ENCODE measurements at regions of chr2 and their contacts with region 1.

Region 1: GRCh38 chr2:196798980-196799379 is 503 bp downstream of the GTF3C3 start:
- DNase-seq: no peak
- H3K4me3 ChIP-seq: peak overlapping the region; percentile 90
- H3K27ac ChIP-seq: peak overlapping the region; percentile 37
- H3K4me1 ChIP-seq: peaks cover 13% of the 10 kb centered on the region
- CTCF ChIP-seq: no peak

Region 2: DNA sequence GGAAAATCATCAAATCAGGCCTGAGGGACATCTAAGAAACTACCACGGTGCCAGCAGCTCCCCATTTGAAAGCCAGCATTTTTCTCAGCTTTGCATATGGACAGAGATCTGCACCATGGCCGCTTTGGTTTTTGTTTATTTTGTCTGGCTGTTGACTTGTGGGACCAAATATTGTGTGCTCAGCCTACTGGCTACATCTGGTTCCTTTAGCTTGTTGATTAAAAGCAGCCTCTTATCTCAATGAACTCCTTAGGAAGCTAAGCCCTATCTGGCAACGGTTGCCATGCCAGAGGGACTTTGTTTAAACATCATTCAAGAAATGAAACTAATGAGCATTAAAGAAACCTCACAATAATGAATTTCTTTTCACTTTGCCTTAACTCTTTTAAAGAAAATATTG is 191.9 kb before region 1 on chr2:
- CTCF ChIA-PET with region 1: no interaction called
- POLR2A ChIA-PET with region 1: interaction called, 11 read pairs
- intact Hi-C with region 1: no loop called
- DNase-seq: no peak
- H3K4me3 ChIP-seq: no peak overlapping the region
- H3K27ac ChIP-seq: no peak overlapping the region
- H3K4me1 ChIP-seq: no peaks in the 10 kb centered on the region
- CTCF ChIP-seq: no peak

Region 3: DNA sequence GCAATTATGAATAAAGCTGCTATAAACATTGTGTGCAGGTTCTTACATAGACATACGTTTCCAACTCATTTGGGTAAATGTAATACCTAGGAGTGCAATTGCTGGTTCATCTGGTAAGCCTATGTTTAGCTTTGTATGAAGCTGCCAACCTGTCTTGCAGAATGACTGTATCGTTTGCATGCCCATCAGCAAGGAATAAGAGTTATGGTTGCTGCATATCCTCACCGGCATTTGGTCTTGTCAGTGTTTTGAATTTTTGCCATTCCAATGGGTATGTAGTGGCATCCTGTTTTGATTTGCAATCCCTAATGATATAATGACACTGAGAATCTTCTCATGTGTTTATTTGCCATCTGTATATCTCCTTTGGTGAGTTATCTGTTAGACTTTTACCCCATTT is 138.7 kb before region 1 on chr2:
- CTCF ChIA-PET with region 1: no interaction called
- POLR2A ChIA-PET with region 1: no interaction called
- intact Hi-C with region 1: no loop called
- DNase-seq: no peak
- H3K4me3 ChIP-seq: no peak overlapping the region
- H3K27ac ChIP-seq: no peak overlapping the region
- H3K4me1 ChIP-seq: no peaks in the 10 kb centered on the region
- CTCF ChIP-seq: no peak

Region 4: DNA sequence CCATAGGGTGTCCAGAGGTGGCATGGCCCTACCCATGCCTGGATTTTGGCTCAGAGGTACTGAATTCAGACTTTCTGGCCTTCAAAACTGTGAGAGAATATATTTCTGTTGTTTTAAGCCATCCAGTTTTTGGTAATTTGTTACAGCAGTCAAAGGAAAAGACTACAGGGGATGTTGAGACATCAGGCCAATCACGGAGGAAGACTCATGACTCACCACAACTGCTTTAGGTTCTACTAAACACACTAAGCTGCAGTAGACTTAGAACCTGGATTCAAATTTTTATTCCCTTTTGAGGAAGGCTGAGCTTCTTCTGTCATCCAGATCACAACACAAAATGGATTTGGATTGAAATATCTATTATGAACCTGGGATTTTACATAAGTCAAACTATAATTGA is 22.2 kb after region 1 on chr2:
- CTCF ChIA-PET with region 1: no interaction called
- POLR2A ChIA-PET with region 1: no interaction called
- intact Hi-C with region 1: no loop called
- DNase-seq: no peak
- H3K4me3 ChIP-seq: no peak overlapping the region
- H3K27ac ChIP-seq: no peak overlapping the region
- H3K4me1 ChIP-seq: no peaks in the 10 kb centered on the region
- CTCF ChIP-seq: no peak

Region 5: DNA sequence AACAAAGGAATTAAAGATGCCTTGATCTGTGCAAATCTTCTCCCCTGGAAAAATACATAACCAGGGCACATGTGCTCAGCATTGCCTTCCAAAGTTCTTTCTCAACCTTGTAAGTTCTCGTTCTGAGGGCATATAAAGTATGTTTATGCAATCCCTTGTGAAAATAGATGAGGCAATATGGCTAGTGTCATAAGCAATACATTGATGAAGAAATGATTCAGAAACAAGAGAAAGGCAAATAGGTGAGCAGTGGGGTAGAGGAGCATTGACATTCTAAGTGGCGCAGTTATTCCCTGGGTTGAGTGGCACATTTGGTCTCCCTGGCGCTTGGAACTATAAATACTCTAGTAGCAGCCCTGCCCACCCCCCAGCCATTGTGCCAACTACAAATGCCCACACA is 185.0 kb after region 1 on chr2:
- CTCF ChIA-PET with region 1: no interaction called
- POLR2A ChIA-PET with region 1: no interaction called
- intact Hi-C with region 1: no loop called
- DNase-seq: no peak
- H3K4me3 ChIP-seq: no peak overlapping the region
- H3K27ac ChIP-seq: no peak overlapping the region
- H3K4me1 ChIP-seq: peaks cover 4% of the 10 kb centered on the region
- CTCF ChIP-seq: no peak

Region 6: DNA sequence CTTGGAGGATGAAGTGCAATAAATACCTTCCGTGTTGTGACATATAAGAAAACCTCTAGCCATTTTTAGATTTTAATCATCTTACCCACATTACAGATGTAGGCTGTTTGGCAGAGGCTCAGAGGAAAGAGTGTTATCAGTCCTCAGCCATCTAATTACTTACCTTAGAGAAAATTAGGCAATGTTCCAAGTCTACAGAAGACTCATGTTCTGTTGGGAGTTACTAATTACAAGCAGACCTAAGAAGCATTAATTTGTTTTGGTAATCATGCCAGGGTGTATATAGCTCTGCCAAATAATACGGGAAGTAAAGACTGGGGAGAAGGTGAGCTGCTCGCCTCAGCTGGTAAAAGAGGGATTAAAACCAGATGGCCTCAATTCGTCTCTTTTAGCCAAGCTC is 253.4 kb after region 1 on chr2:
- CTCF ChIA-PET with region 1: no interaction called
- POLR2A ChIA-PET with region 1: no interaction called
- intact Hi-C with region 1: no loop called
- DNase-seq: no peak
- H3K4me3 ChIP-seq: no peak overlapping the region
- H3K27ac ChIP-seq: no peak overlapping the region
- H3K4me1 ChIP-seq: no peaks in the 10 kb centered on the region
- CTCF ChIP-seq: no peak